T-cell (primary cell): ENCODE measurements at regions of chr2 and their contacts with region 1.

Region 1: GRCh38 chr2:174603280-174603679 is 5.7 kb upstream of the WIPF1 start:
- DNase-seq: peak in 33 of 35 experiments; percentile 15 to 81 (median 41)
- ATAC-seq: peak; percentile 65 to 74 (median 70)
- H3K4me3 ChIP-seq: no peak overlapping the region
- H3K4me3 Mint-ChIP-seq: peak overlapping the region in 1 of 3 donors; percentile 15
- H3K27ac ChIP-seq: peak overlapping the region; percentile 89
- H3K27ac Mint-ChIP-seq: peak overlapping the region; percentile 91 to 93
- H3K4me1 ChIP-seq: peaks cover 50 to 69% of the 10 kb centered on the region in 2 experiments
- H3K4me1 Mint-ChIP-seq: peaks cover 88 to 98% (median 90%) of the 10 kb centered on the region in 3 donors
- H3K27me3 ChIP-seq: no peaks in the 10 kb centered on the region
- H3K27me3 Mint-ChIP-seq: no peaks in the 10 kb centered on the region

Region 2: DNA sequence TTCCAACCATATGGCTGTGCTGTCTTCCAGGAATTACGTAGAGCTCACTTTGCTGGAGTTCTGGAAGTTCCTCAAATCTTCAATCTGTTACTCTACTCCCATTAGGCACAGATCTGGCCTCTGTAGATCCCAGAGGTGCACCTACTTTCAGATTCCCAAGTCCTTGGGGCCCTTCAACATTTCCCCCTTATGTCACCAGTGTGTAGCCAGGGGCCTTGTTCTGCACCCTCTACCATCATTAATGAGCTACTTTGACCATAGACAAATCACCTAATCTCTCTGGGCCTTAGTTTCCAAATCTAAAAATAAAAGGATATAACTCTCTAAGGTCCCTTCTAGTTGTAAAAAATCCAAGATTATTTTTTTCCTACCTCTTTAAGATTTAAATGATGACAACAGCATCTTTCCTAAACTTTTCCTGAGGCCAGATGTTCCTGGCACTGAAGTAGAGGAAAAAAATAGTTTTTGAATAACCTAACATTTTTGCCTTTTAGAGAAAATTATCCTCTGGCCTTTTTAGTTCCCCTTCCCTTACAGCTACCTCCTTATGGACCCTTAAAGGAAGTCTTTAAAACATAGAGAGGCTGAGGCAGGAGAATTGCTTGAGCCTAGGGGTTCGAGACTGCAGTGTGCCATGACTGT is 25.4 kb after region 1 on chr2:
- CTCF ChIA-PET with region 1: interaction called in 1 of 2 experiments, 7 read pairs
- POLR2A ChIA-PET with region 1: interaction called in 1 of 2 experiments, 12 read pairs
- DNase-seq: no peak
- ATAC-seq: no peak
- H3K4me3 ChIP-seq: no peak overlapping the region
- H3K4me3 Mint-ChIP-seq: peak overlapping the region in 2 of 3 donors; percentile 2 to 89
- H3K27ac ChIP-seq: no peak overlapping the region
- H3K27ac Mint-ChIP-seq: peak overlapping the region; percentile 44 to 80
- H3K4me1 ChIP-seq: peaks cover 32 to 51% of the 10 kb centered on the region in 2 experiments
- H3K4me1 Mint-ChIP-seq: peaks cover 81 to 84% (median 84%) of the 10 kb centered on the region in 3 donors
- H3K27me3 ChIP-seq: no peaks in the 10 kb centered on the region
- H3K27me3 Mint-ChIP-seq: no peaks in the 10 kb centered on the region

Region 3: GRCh38 chr2:174688079-174688478 is 84.8 kb after region 1 on chr2:
- CTCF ChIA-PET with region 1: interaction called, 18 to 36 read pairs
- POLR2A ChIA-PET with region 1: interaction called in 1 of 2 experiments, 3 read pairs
- DNase-seq: peak in 1 of 35 experiments; percentile 68
- ATAC-seq: peak; percentile 50 to 62 (median 60)
- H3K4me3 ChIP-seq: no peak overlapping the region
- H3K4me3 Mint-ChIP-seq: no peak overlapping the region
- H3K27ac ChIP-seq: no peak overlapping the region
- H3K27ac Mint-ChIP-seq: peak overlapping the region; percentile 56 to 73
- H3K4me1 ChIP-seq: peaks cover 0 to 5% of the 10 kb centered on the region in 2 experiments
- H3K4me1 Mint-ChIP-seq: peaks cover 24 to 29% (median 26%) of the 10 kb centered on the region in 3 donors
- H3K27me3 ChIP-seq: peaks cover 0 to 8% of the 10 kb centered on the region in 2 experiments
- H3K27me3 Mint-ChIP-seq: no peaks in the 10 kb centered on the region